PC-9 (cell line): ENCODE measurements at regions of chr16 and their contacts with region 1.

Region 1: GRCh38 chr16:56869513-56870275 is 4.7 kb downstream of the SLC12A3 start:
- DNase-seq: peak in 1 of 2 experiments; percentile 42
- H3K4me3 ChIP-seq: no peak overlapping the region
- H3K27ac ChIP-seq: no peak overlapping the region
- H3K4me1 ChIP-seq: peaks cover 7% of the 10 kb centered on the region; the same call in 1 of the 2 replicates
- H3K27me3 ChIP-seq: no peaks in the 10 kb centered on the region
- CTCF ChIP-seq: peak; percentile 44; the same call in 1 of the 2 replicates

Region 2: DNA sequence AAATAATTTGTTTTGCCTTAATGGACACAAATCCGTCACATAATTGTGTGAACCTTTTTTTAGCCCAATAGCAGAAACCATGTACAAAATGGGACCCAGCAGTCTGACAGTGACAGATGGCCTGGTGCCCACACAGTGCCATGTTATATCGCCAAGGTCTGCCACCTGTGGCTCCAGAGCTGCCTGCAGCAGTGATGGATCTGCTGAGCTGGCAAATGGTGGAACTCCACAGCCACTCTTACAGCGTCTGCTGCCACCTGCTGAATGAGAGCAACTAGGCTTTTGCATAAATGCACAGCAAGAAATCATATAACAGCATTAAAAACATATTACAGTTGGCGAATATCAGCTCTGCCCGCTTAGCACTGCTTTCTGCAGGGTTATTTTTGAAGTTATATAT is 80.3 kb before region 1 on chr16:
- CTCF ChIA-PET with region 1: interaction called, 9 read pairs
- POLR2A ChIA-PET with region 1: no interaction called
- intact Hi-C with region 1: loop called (anchors 2 kb)
- DNase-seq: peak; percentile 55
- H3K4me3 ChIP-seq: no peak overlapping the region
- H3K27ac ChIP-seq: no peak overlapping the region
- H3K4me1 ChIP-seq: no peaks in the 10 kb centered on the region
- H3K27me3 ChIP-seq: no peaks in the 10 kb centered on the region
- CTCF ChIP-seq: peak; percentile 59

Region 3: GRCh38 chr16:56851671-56852400 is 17.9 kb before region 1 on chr16:
- CTCF ChIA-PET with region 1: interaction called, 10 read pairs
- POLR2A ChIA-PET with region 1: interaction called, 3 read pairs
- intact Hi-C with region 1: no loop called
- DNase-seq: peak in 1 of 2 experiments; percentile 11
- H3K4me3 ChIP-seq: no peak overlapping the region
- H3K27ac ChIP-seq: no peak overlapping the region
- H3K4me1 ChIP-seq: peaks cover 28% of the 10 kb centered on the region
- H3K27me3 ChIP-seq: no peaks in the 10 kb centered on the region
- CTCF ChIP-seq: peak; percentile 63

Region 4: GRCh38 chr16:56932721-56933619 is 63.3 kb after region 1 on chr16:
- CTCF ChIA-PET with region 1: interaction called, 5 read pairs
- POLR2A ChIA-PET with region 1: no interaction called
- intact Hi-C with region 1: loop called (anchors 1 kb)
- DNase-seq: peak; percentile 66 to 84
- H3K4me3 ChIP-seq: peak overlapping the region; percentile 97
- H3K27ac ChIP-seq: peak overlapping the region; percentile 91
- H3K4me1 ChIP-seq: peaks cover 25% of the 10 kb centered on the region
- H3K27me3 ChIP-seq: no peaks in the 10 kb centered on the region
- CTCF ChIP-seq: no peak

Region 5: DNA sequence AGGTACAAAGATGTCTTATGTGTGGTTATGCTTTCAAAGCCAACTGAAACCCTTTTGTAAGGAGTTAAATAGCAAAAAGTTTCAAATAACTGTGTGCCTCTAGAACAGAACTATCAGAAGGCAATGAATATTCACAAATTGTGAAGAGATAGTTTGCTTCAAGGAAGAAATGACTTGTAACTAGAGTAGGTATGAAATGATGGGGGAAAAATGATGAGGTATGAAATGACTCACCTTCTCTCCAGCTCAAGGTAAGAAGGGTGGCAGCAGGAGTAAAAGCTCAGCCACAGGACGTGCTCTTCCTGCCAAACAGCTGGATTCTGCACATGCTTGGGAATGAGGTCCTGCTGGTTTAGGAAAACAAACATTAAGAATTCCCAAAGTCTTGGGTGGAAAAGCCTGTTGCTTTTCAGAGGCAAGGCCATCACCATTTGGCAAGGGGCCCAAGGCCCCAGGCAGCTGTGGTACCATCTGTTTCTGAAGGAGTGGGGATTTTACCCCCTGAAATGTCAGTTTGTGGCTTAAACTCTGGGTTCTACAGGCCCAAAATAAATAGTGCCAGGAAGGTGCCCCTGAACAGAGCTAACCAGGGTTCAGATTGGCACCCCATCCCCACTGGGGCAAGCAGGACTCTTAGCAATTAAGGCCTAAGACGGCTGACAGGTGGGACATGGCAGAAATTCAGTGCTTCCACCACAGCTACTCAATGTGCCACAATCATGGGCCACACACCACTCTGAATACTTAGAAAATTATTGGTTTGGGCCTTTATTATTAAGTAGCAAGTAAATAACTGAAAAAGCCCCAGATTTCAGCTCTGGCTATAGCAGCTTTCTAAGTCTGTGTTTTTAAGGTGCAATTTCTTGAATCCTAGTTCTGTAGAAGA is 75.5 kb after region 1 on chr16:
- CTCF ChIA-PET with region 1: no interaction called
- POLR2A ChIA-PET with region 1: no interaction called
- intact Hi-C with region 1: loop called (anchors 2 kb)
- DNase-seq: peak; percentile 64 to 74
- H3K4me3 ChIP-seq: no peak overlapping the region
- H3K27ac ChIP-seq: peak overlapping the region; percentile 57
- H3K4me1 ChIP-seq: peaks cover 24% of the 10 kb centered on the region
- H3K27me3 ChIP-seq: no peaks in the 10 kb centered on the region
- CTCF ChIP-seq: no peak

Region 6: GRCh38 chr16:57084257-57084770 is 214.6 kb after region 1 on chr16:
- CTCF ChIA-PET with region 1: no interaction called
- POLR2A ChIA-PET with region 1: no interaction called
- intact Hi-C with region 1: loop called (anchors 1 kb)
- DNase-seq: peak; percentile 47 to 59
- H3K4me3 ChIP-seq: no peak overlapping the region
- H3K27ac ChIP-seq: no peak overlapping the region
- H3K4me1 ChIP-seq: no peaks in the 10 kb centered on the region
- H3K27me3 ChIP-seq: no peaks in the 10 kb centered on the region
- CTCF ChIP-seq: peak; percentile 98

Region 7: DNA sequence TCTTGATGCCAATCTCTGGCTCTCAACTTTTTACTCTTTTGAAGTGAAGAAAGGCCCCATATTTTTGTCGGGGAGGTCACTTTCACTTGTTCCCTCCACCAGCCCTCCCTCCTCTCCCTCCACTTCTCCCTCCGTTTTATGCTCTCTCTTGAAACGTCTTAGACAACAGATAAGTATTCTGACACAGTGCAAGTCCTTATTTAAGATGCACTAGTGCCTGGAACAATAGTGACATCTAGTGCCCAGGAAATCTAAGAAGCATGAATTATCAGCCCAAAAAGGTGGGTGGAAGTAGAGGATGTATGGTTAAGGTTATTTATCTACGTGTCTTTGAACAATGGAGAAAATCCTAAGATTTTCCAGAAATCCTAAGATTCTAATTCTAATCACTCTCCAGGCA is 298.3 kb after region 1 on chr16:
- CTCF ChIA-PET with region 1: no interaction called
- POLR2A ChIA-PET with region 1: no interaction called
- intact Hi-C with region 1: loop called (anchors 1 kb)
- DNase-seq: peak in 1 of 2 experiments; percentile 51
- H3K4me3 ChIP-seq: no peak overlapping the region
- H3K27ac ChIP-seq: no peak overlapping the region
- H3K4me1 ChIP-seq: no peaks in the 10 kb centered on the region
- H3K27me3 ChIP-seq: no peaks in the 10 kb centered on the region
- CTCF ChIP-seq: peak; percentile 73